Heart right ventricle (tissue), 16 donors: ENCODE measurements at regions of chr7 and their contacts with region 1.

Region 1: DNA sequence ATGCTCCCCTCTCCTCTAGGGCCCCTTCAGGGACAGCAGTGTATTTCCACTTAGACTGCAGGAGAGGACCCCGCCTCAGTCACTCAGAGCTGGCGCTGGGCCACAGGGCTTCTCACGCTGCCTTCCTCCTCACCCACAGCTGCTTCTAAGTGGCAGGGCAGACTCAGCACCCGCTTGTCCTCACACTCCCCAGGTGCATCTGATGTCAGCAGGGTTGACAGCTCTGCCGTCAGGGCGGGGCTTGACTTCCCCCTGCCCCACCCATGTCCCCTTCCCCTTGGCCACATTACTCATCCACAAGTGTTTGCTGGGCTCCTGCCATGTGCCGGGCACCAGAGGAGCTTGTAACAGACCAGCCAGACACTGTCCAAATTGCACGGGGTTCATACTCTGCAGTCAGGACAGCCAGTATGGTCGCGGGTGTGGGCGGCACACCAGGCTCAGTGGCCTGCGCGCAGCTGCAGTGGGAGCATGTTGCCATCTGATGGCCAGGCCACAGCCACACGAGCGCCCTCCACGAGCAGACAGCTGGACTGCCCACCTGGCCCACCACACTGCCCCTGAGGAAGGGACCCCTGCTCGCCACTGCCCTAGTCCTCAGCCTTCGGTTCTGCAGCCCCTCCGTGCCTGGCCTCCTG is 29.3 kb upstream of the TTYH3 start:
- DNase-seq: no peak
- ATAC-seq: peak in 1 of 8 donors; percentile 3
- H3K4me3 ChIP-seq: no peak overlapping the region
- H3K27ac ChIP-seq: no peak overlapping the region
- H3K4me1 ChIP-seq: peaks cover 4 to 33% (median 25%) of the 10 kb centered on the region in 9 donors
- H3K27me3 ChIP-seq: no peaks in the 10 kb centered on the region
- CTCF ChIP-seq: no peak

Region 2: GRCh38 chr7:2495418-2496299 is 106.9 kb before region 1 on chr7:
- intact Hi-C with region 1: no loop called
- DNase-seq: no peak
- ATAC-seq: no peak
- H3K4me3 ChIP-seq: no peak overlapping the region
- H3K27ac ChIP-seq: no peak overlapping the region
- H3K4me1 ChIP-seq: peaks cover 13 to 40% (median 21%) of the 10 kb centered on the region in 9 donors
- H3K27me3 ChIP-seq: peaks cover 0 to 22% (median 6%) of the 10 kb centered on the region in 7 donors
- CTCF ChIP-seq: no peak

Region 3: GRCh38 chr7:2641406-2642393 is 39.2 kb after region 1 on chr7:
- intact Hi-C with region 1: loop called in 3 of 10 experiments (anchors 5 kb)
- DNase-seq: peak; percentile 92 to 94
- ATAC-seq: peak; percentile 74 to 88 (median 82)
- H3K4me3 ChIP-seq: peak overlapping the region in 9 of 10 donors; percentile 3 to 45 (median 33)
- H3K27ac ChIP-seq: peak overlapping the region; percentile 73 to 96 (median 82)
- H3K4me1 ChIP-seq: peaks cover 32 to 97% (median 73%) of the 10 kb centered on the region in 9 donors
- H3K27me3 ChIP-seq: no peaks in the 10 kb centered on the region
- CTCF ChIP-seq: no peak

Region 4: GRCh38 chr7:2660585-2661408 is 58.3 kb after region 1 on chr7:
- intact Hi-C with region 1: no loop called
- DNase-seq: no peak
- ATAC-seq: peak in 1 of 8 donors; percentile 2
- H3K4me3 ChIP-seq: no peak overlapping the region
- H3K27ac ChIP-seq: no peak overlapping the region
- H3K4me1 ChIP-seq: peaks cover 8 to 30% (median 25%) of the 10 kb centered on the region in 9 donors
- H3K27me3 ChIP-seq: no peaks in the 10 kb centered on the region
- CTCF ChIP-seq: peak in 3 of 9 donors; percentile 15 to 28 (median 18)

Region 5: GRCh38 chr7:3092468-3092867 is 489.9 kb after region 1 on chr7:
- intact Hi-C with region 1: no loop called
- DNase-seq: peak; percentile 12 to 29
- ATAC-seq: peak in 7 of 8 donors; percentile 17 to 71 (median 50)
- H3K4me3 ChIP-seq: no peak overlapping the region
- H3K27ac ChIP-seq: peak overlapping the region in 1 of 10 donors; percentile 59
- H3K4me1 ChIP-seq: peaks cover 0 to 44% (median 0%) of the 10 kb centered on the region in 9 donors
- H3K27me3 ChIP-seq: peaks cover 0 to 18% (median 8%) of the 10 kb centered on the region in 7 donors
- CTCF ChIP-seq: no peak